Activated B cell treated with CpG ODN at 0.5 μM for 24 hours (primary cell): ENCODE measurements at regions of chr2 and their contacts with region 1.

Region 1: DNA sequence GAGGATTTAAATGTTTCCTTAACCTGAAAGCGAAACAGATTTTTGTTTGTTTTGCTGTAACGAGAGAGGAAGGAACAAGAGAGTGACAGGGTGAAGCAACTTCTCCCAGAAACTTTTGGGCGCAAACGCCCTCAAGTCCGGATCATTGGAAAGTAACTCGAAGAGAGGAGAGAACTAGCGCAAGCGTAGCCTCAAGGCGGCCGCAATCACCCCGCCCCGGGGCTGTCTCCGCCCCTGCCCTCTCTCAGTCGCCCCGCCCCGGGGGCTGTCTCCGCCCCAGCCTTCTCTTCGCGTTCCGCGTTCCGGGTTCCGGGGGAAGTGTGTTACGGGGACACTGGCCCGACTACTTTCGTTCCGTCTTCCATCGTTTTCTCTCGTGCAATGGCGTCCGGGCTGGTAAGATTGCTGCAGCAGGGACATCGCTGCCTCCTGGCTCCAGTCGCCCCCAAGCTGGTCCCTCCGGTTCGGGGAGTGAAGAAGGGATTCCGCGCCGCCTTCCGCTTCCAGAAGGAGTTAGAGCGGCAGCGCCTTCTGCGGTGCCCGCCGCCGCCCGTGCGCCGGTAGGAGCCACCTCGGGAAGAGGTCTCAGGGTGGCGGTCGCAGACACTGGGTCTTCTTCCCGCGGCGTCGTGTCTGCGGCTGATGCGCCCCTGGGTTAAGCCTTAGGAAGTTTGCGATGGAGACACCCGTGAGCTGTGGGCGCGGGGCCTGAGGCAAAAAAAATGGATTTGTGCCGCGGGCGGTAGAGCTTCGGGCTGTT is at the start of gene MRPL44:
- DNase-seq: peak; percentile 98
- ATAC-seq: peak; percentile 98
- H3K4me3 Mint-ChIP-seq: peak within 1 kb of the TSS; percentile 95
- H3K27ac Mint-ChIP-seq: peak within 1 kb of the TSS; percentile 94
- H3K4me1 Mint-ChIP-seq: peaks cover 75% of the 10 kb centered on the region
- H3K27me3 Mint-ChIP-seq: no peaks in the 10 kb centered on the region
- CTCF ChIP-seq: no peak
- total RNA-seq, gene MRPL44: 29.9 and 30.4 TPM in 2 replicates

Region 2: DNA sequence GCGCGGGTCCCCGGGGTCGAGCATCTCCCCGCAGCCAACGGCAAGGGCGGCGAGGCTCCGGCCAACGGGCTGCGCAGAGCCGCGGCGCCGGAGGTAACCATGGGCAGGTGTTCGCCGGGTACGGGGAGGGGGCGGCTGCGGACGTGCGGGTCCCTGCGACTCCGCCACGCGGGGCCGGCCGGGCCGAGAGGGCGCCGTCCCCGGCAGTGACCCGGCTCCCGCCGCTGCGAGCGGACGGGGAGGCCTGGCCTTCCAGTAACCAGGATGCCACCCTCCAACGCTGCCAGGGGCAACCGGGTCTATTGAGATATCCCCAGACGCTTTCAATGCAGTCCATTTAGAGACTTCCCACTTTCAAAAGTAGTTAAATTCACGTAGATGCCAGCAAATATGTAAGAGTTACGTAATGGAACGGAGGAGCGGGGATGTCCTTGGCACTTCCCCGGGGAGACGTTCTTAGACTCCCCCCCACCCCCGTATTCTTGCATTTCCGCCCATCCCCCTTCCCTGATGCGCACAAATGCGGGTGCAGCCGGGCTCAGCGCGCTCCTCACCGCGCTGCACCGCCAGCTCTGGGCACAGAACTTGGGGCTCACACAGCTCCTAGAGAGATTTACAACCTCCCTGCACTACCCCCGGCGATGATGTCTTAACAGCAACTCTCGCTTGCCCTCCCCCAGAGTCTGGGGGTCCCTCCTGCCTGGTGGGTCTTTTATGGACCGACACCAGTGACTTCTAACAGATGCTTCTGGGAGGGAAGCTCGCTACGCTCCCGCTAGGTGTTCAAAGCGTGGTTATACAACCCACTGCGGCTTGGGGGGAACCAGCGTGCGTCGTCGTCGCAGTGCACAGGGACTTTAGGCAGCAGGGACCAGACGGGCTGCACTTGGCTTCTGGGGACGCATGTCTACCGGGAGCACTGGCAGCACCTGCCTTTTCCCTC is 1532.3 kb before region 1 on chr2:
- CTCF ChIA-PET with region 1: no interaction called
- POLR2A ChIA-PET with region 1: no interaction called
- intact Hi-C with region 1: loop called (anchors 10 kb)
- DNase-seq: peak; percentile 32
- ATAC-seq: peak; percentile 42
- H3K4me3 Mint-ChIP-seq: peak overlapping the region; percentile 90
- H3K27ac Mint-ChIP-seq: peak overlapping the region; percentile 81
- H3K4me1 Mint-ChIP-seq: peaks cover 47% of the 10 kb centered on the region
- H3K27me3 Mint-ChIP-seq: peaks cover 23% of the 10 kb centered on the region
- CTCF ChIP-seq: no peak

Region 3: GRCh38 chr2:222912117-222912516 is 1045.2 kb before region 1 on chr2:
- CTCF ChIA-PET with region 1: no interaction called
- POLR2A ChIA-PET with region 1: no interaction called
- intact Hi-C with region 1: loop called (anchors 1 kb)
- DNase-seq: peak; percentile 23
- ATAC-seq: peak; percentile 97
- H3K4me3 Mint-ChIP-seq: peak overlapping the region; percentile 75
- H3K27ac Mint-ChIP-seq: peak overlapping the region; percentile 89
- H3K4me1 Mint-ChIP-seq: peaks cover 53% of the 10 kb centered on the region
- H3K27me3 Mint-ChIP-seq: no peaks in the 10 kb centered on the region
- CTCF ChIP-seq: no peak

Region 4: GRCh38 chr2:223805008-223805407 is 152.3 kb before region 1 on chr2:
- CTCF ChIA-PET with region 1: no interaction called
- POLR2A ChIA-PET with region 1: interaction called, 11 read pairs
- intact Hi-C with region 1: no loop called
- DNase-seq: no peak
- ATAC-seq: no peak
- H3K4me3 Mint-ChIP-seq: peak overlapping the region; percentile 55
- H3K27ac Mint-ChIP-seq: peak overlapping the region; percentile 79
- H3K4me1 Mint-ChIP-seq: peaks cover 67% of the 10 kb centered on the region
- H3K27me3 Mint-ChIP-seq: no peaks in the 10 kb centered on the region
- CTCF ChIP-seq: no peak

Region 5: DNA sequence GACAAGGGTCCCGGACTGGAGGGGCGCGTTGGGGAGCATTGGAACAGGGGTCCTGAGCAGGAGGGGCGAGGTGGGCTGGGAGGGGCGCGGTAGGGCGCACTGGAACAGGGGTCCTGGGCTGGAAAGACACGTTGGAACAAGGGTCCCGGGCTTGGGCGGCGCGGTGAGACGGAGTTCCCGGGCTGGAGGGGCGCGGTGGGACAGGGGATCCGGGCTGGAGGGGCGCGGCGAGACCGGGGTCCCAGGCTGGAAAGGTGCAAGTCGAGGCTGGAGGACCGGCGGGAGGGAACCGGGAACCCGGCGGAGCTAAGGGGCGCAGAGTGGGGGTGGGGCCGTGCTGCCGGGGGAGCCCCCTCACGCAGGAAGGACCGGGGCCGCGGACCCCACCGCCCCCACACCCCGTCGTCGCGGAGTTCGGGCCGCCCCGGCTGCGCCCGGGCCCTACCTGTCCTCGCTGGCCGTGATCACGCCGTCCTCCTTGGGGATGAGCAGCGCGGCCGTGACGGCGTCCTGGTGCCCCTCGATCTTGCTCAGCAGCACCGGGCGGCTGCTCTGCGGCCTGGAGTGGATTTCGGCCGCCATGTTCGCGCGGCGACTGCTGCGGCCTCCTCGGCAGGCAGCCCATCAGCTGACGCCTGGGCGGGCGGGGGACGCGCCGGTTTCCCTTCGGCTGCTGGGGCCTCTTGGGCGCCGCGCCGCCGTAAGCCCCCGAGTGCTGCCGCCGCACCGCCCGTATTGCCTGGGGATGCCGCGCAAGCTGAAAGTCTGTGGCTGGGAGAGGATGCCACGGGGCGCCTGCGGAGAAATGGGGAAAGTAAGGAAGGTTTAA is 12.4 kb before region 1 on chr2 and contains the start of gene WDFY1:
- CTCF ChIA-PET with region 1: interaction called, 4 read pairs
- POLR2A ChIA-PET with region 1: interaction called, 27 read pairs
- intact Hi-C with region 1: loop called (anchors 1 kb)
- DNase-seq: peak; percentile 80
- ATAC-seq: peak; percentile 94
- H3K4me3 Mint-ChIP-seq: peak within 1 kb of the TSS; percentile 95
- H3K27ac Mint-ChIP-seq: peak within 1 kb of the TSS; percentile 88
- H3K4me1 Mint-ChIP-seq: peaks cover 58% of the 10 kb centered on the region
- H3K27me3 Mint-ChIP-seq: no peaks in the 10 kb centered on the region
- CTCF ChIP-seq: no peak
- total RNA-seq, gene WDFY1: 67.2 and 77.0 TPM in 2 replicates

Region 6: GRCh38 chr2:224017957-224018356 is 60.7 kb after region 1 on chr2:
- CTCF ChIA-PET with region 1: no interaction called
- POLR2A ChIA-PET with region 1: no interaction called
- intact Hi-C with region 1: no loop called
- DNase-seq: no peak
- ATAC-seq: no peak
- H3K4me3 Mint-ChIP-seq: no peak overlapping the region
- H3K27ac Mint-ChIP-seq: no peak overlapping the region
- H3K4me1 Mint-ChIP-seq: peaks cover 5% of the 10 kb centered on the region
- H3K27me3 Mint-ChIP-seq: peaks cover 2% of the 10 kb centered on the region
- CTCF ChIP-seq: no peak

Region 7: DNA sequence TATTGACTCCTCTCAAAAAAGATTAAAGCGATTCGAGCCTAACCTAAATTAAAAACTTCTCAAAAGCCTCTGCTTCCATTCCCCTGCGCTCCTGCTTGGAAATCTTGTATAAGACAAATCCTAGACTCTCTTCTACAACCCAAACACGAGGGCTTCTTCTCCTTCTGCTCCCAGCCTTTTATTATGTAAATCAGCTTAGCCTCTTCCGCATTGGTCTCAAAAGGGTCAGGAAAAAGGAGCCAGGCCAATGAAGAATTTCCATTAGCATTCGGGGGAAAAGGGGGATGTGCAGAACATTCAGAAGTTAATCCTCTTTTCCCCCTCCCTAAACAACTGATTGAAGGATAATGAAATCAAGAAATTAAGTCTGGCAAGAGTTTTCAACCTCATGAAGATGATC is 336.7 kb after region 1 on chr2:
- CTCF ChIA-PET with region 1: no interaction called
- POLR2A ChIA-PET with region 1: no interaction called
- intact Hi-C with region 1: no loop called
- DNase-seq: no peak
- ATAC-seq: no peak
- H3K4me3 Mint-ChIP-seq: no peak overlapping the region
- H3K27ac Mint-ChIP-seq: no peak overlapping the region
- H3K4me1 Mint-ChIP-seq: no peaks in the 10 kb centered on the region
- H3K27me3 Mint-ChIP-seq: peaks cover 25% of the 10 kb centered on the region
- CTCF ChIP-seq: no peak

Region 8: GRCh38 chr2:224520064-224520463 is 562.8 kb after region 1 on chr2:
- CTCF ChIA-PET with region 1: no interaction called
- POLR2A ChIA-PET with region 1: interaction called, 7 read pairs
- intact Hi-C with region 1: loop called (anchors 10 kb)
- DNase-seq: no peak
- ATAC-seq: no peak
- H3K4me3 Mint-ChIP-seq: peak overlapping the region; percentile 68
- H3K27ac Mint-ChIP-seq: peak overlapping the region; percentile 96
- H3K4me1 Mint-ChIP-seq: peaks cover 89% of the 10 kb centered on the region
- H3K27me3 Mint-ChIP-seq: no peaks in the 10 kb centered on the region
- CTCF ChIP-seq: no peak